CD8-positive, alpha-beta T cell (primary cell): ENCODE measurements at regions of chr3 and their contacts with region 1.

Region 1: DNA sequence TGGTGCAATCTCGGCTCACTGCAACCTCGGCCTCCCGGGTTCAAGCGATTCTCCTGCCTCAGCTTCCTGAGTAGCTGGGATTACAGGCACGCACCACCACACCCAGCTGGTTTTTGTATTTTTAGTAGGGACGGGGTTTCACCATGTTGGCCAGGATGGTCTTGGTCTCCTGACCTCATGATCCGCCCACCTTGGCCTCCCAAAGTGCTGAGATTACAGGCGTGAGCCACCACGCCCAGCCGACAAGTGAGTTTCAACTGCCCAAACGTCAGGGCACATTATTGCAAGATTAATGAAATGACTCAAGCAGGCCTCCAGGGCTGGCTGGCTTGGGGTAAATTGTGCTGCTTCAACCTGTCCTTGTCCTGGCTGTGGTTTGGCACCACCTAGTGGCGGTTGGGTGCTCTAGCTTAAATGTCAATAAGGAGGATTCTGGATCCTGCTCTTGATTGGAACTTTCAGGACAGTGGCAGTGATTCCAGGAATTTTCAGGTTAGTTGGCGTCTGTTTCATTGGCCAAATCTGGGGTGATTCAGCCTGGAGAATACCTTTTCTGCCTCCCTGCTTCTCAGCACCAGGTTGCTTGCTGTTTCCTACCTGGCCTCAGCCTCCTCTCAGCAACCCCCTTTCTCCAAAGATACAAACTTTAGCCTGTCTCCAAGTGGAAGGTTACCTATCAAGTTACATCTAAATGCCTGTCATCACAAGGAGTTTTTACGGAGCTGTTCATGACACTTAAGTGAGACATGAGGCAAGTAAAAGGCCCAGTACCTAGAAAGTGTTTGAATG is 32.4 kb upstream of the SACM1L start:
- DNase-seq: peak; percentile 73 to 90 (median 87)
- ATAC-seq: peak; percentile 94
- H3K4me3 ChIP-seq: no peak overlapping the region
- H3K4me3 Mint-ChIP-seq: no peak overlapping the region
- H3K27ac ChIP-seq: no peak overlapping the region
- H3K27ac Mint-ChIP-seq: no peak overlapping the region
- H3K4me1 ChIP-seq: no peaks in the 10 kb centered on the region
- H3K4me1 Mint-ChIP-seq: peaks cover 14% of the 10 kb centered on the region
- H3K27me3 ChIP-seq: no peaks in the 10 kb centered on the region
- H3K27me3 Mint-ChIP-seq: no peaks in the 10 kb centered on the region
- CTCF ChIP-seq: peak; percentile 77

Region 2: GRCh38 chr3:45123030-45123429 is 533.7 kb before region 1 on chr3:
- CTCF ChIA-PET with region 1: no interaction called
- POLR2A ChIA-PET with region 1: no interaction called
- intact Hi-C with region 1: no loop called
- DNase-seq: no peak
- ATAC-seq: no peak
- H3K4me3 ChIP-seq: no peak overlapping the region
- H3K4me3 Mint-ChIP-seq: no peak overlapping the region
- H3K27ac ChIP-seq: no peak overlapping the region
- H3K27ac Mint-ChIP-seq: no peak overlapping the region
- H3K4me1 ChIP-seq: peaks cover 14% of the 10 kb centered on the region
- H3K4me1 Mint-ChIP-seq: peaks cover 15% of the 10 kb centered on the region
- H3K27me3 ChIP-seq: peaks cover 3 to 4% of the 10 kb centered on the region in 2 experiments
- H3K27me3 Mint-ChIP-seq: peaks cover 19% of the 10 kb centered on the region
- CTCF ChIP-seq: no peak

Region 3: DNA sequence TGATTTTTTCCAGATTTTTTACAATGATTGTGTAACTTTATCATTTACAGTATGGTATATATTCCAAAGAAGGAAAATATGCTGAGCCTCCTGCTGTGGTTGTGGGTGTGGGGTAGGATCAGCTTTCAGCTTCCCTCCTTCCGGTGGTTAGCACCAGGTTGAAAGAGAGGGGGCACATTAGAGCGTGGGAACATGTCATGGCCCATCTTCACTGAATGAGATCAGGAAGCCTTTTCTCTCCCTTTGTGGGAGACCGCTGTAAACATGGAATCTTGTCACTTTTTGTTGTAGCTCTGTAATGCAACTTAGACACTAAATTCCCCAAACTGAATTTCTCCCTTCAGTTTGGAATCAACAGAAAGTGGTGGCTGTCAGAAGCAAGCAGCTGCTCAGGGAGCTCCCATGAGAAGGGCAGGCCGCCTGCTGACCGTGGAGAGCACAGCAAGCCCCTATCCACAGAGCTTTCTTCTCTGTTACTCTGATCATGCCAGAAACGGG is 148.9 kb before region 1 on chr3:
- CTCF ChIA-PET with region 1: interaction called, 256 read pairs
- POLR2A ChIA-PET with region 1: interaction called, 3 read pairs
- intact Hi-C with region 1: loop called (anchors 1 kb)
- DNase-seq: peak in 2 of 9 experiments; percentile 9 to 20
- ATAC-seq: peak; percentile 42
- H3K4me3 ChIP-seq: no peak overlapping the region
- H3K4me3 Mint-ChIP-seq: no peak overlapping the region
- H3K27ac ChIP-seq: no peak overlapping the region
- H3K27ac Mint-ChIP-seq: no peak overlapping the region
- H3K4me1 ChIP-seq: peaks cover 12% of the 10 kb centered on the region
- H3K4me1 Mint-ChIP-seq: peaks cover 8% of the 10 kb centered on the region
- H3K27me3 ChIP-seq: no peaks in the 10 kb centered on the region
- H3K27me3 Mint-ChIP-seq: no peaks in the 10 kb centered on the region
- CTCF ChIP-seq: no peak

Region 4: DNA sequence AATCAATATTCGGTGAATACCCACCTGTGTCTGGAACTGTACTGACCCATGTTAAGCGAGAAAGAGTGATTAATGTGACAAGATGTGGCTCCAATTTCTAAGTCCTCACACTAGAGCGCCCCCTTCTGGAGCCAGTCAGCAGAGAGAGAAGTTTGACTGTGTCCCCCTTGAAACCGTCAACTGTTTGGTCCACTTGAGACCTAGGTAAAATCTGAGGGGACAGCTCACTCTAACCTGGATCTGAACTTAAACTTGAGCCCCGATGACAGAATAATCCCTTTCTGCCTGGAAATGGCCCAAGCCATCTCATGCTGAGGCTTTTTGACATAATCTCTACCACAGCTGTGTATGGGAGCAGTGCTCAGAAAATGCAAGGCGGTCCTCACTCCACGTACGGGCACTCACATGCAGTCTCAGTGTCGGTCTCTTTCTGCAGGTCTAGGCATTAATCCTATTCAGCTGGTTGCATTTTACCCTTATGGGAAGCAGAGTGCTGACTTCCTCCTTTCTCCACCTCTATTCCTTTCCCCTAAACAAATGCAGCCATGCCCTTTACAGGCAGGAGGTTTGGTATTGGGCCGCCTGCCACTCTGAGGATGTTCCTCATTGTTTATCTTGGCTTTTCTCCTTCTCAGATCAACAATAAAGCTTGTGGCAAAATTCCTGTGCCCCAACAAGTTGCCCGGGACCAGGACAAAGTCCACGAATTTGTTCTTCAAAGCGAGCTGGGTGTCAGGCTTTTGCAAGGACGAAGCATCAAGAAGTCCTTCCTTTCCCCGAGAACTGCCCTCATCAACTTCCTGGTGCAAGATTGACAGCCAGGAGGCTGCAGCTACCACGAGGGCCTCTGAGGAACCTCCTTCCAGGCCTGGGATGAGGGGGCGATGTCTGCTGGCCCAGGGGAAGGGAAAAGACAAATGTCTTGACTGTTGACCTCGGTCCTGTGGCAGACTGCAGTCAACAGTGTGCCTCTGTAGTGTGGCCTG is 109.8 kb before region 1 on chr3:
- CTCF ChIA-PET with region 1: interaction called, 14 read pairs
- POLR2A ChIA-PET with region 1: no interaction called
- intact Hi-C with region 1: no loop called
- DNase-seq: peak in 4 of 9 experiments; percentile 21 to 41 (median 34)
- ATAC-seq: no peak
- H3K4me3 ChIP-seq: no peak overlapping the region
- H3K4me3 Mint-ChIP-seq: no peak overlapping the region
- H3K27ac ChIP-seq: no peak overlapping the region
- H3K27ac Mint-ChIP-seq: no peak overlapping the region
- H3K4me1 ChIP-seq: no peaks in the 10 kb centered on the region
- H3K4me1 Mint-ChIP-seq: no peaks in the 10 kb centered on the region
- H3K27me3 ChIP-seq: no peaks in the 10 kb centered on the region
- H3K27me3 Mint-ChIP-seq: no peaks in the 10 kb centered on the region
- CTCF ChIP-seq: peak; percentile 38

Region 5: DNA sequence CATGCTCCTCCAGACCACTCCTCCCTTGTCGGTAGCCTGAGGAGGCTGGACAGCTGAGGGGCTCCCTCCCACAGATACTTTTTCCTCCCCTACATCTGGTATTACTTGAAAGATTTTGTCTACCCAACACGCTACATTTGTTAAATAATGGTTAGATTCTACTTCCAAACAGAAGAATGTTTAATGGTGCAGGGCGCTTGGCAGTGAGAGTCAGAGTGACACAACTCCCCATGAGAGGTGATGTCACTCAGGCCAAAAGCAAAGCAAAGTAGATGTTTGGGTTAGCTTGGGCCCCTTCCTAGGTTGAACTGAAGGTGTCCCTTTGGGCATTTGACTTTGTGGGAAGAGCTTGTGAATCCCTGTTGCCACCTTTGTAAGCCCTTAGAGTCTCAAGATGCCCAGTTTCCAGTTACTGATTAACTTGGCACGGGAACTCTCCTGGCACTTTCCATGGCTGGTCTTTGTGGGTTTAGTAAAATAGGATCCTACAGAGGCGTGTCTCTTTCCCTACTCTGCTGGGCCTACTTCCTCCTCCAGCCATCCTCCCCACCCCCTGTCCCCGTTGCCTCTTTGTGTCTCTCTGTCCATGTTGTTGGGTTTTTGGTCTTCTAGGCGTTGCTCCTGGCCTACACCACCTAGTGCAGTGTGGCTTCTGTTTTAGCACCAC is 56.7 kb before region 1 on chr3:
- CTCF ChIA-PET with region 1: interaction called, 10 read pairs
- POLR2A ChIA-PET with region 1: interaction called, 3 read pairs
- intact Hi-C with region 1: no loop called
- DNase-seq: no peak
- ATAC-seq: no peak
- H3K4me3 ChIP-seq: no peak overlapping the region
- H3K4me3 Mint-ChIP-seq: peak overlapping the region; percentile 8
- H3K27ac ChIP-seq: no peak overlapping the region
- H3K27ac Mint-ChIP-seq: peak overlapping the region; percentile 56
- H3K4me1 ChIP-seq: peaks cover 44% of the 10 kb centered on the region
- H3K4me1 Mint-ChIP-seq: peaks cover 65% of the 10 kb centered on the region
- H3K27me3 ChIP-seq: no peaks in the 10 kb centered on the region
- H3K27me3 Mint-ChIP-seq: no peaks in the 10 kb centered on the region
- CTCF ChIP-seq: no peak

Region 6: DNA sequence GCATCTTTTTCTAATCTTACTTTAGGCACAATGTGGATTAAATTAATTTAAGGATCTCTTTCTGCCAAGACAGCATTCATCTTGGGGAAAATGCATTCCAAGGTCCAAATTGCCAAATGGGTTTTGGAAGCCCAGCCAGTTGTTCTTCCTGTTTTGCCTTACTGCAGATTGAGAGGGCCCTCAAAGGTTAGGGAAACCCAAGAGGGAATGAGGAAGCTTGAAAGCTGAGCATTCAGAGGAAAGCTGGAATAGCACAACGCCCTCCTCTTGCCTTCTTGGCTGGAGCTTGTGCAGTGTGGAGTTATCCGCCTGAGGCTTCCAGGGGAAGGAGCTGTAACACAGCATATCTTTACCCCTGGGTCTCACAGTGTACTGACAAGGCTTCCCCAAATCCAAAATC is 14.2 kb after region 1 on chr3:
- CTCF ChIA-PET with region 1: interaction called, 42 read pairs
- POLR2A ChIA-PET with region 1: interaction called, 11 read pairs
- intact Hi-C with region 1: no loop called
- DNase-seq: no peak
- ATAC-seq: no peak
- H3K4me3 ChIP-seq: no peak overlapping the region
- H3K4me3 Mint-ChIP-seq: no peak overlapping the region
- H3K27ac ChIP-seq: no peak overlapping the region
- H3K27ac Mint-ChIP-seq: no peak overlapping the region
- H3K4me1 ChIP-seq: peaks cover under 1% of the 10 kb centered on the region
- H3K4me1 Mint-ChIP-seq: peaks cover 5% of the 10 kb centered on the region
- H3K27me3 ChIP-seq: no peaks in the 10 kb centered on the region
- H3K27me3 Mint-ChIP-seq: no peaks in the 10 kb centered on the region
- CTCF ChIP-seq: no peak

Region 7: DNA sequence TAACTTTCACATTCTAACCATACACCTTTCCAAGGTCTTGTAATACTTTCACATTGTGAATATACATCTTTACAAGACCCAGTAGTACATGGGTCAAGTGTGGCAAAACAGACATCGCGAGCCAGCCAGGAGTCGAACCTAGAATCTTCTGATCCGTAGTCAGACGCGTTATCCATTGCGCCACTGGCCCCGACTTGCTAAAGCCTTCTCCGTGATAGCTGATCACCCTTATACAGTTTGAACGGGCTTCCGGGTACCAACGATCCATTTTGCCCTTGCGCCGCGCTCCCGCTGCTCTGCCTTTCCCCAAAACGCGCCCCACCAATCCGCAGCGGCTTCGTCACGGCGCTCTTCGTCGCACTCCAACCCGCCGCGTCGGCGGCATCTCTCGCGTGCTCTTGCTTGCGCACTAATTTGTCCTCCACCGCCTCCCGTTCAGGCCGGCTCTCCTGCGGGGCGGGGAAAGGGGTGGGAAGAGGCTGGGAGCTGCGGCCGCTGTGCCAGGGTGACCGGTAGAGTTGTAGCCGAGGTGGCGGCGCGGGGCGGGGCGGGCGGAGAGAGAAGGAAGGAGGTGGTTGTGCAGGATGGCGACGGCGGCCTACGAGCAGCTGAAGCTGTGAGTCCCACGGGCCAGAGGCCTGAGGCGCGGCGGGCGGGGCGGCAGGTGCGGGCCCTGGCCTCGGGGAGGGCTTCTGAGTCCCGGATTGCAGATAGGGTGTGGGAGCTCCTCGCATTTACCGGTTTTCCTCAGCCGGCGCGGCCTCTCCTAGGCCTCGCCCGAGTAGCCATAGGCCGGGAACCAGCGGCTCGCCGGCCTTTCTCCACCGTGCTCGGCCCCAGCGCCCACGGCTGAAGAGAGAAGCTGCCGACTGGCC is 32.4 kb after region 1 on chr3 and contains the start of gene SACM1L:
- CTCF ChIA-PET with region 1: interaction called, 16 read pairs
- POLR2A ChIA-PET with region 1: interaction called, 3 read pairs
- intact Hi-C with region 1: no loop called
- DNase-seq: peak; percentile 88 to 99 (median 94)
- ATAC-seq: peak; percentile 85
- H3K4me3 ChIP-seq: peak within 1 kb of the TSS; percentile 66 to 84
- H3K4me3 Mint-ChIP-seq: peak within 1 kb of the TSS; percentile 86
- H3K27ac ChIP-seq: peak within 1 kb of the TSS; percentile 89 to 94
- H3K27ac Mint-ChIP-seq: peak within 1 kb of the TSS; percentile 98
- H3K4me1 ChIP-seq: peaks cover 41% of the 10 kb centered on the region
- H3K4me1 Mint-ChIP-seq: peaks cover 60% of the 10 kb centered on the region
- H3K27me3 ChIP-seq: no peaks in the 10 kb centered on the region
- H3K27me3 Mint-ChIP-seq: peaks cover 3% of the 10 kb centered on the region
- CTCF ChIP-seq: no peak
- total RNA-seq, gene SACM1L: 54.4 to 56.7 TPM